ENCODE measurements at regions of chr19 and their contacts with region 1.

Region 1: DNA sequence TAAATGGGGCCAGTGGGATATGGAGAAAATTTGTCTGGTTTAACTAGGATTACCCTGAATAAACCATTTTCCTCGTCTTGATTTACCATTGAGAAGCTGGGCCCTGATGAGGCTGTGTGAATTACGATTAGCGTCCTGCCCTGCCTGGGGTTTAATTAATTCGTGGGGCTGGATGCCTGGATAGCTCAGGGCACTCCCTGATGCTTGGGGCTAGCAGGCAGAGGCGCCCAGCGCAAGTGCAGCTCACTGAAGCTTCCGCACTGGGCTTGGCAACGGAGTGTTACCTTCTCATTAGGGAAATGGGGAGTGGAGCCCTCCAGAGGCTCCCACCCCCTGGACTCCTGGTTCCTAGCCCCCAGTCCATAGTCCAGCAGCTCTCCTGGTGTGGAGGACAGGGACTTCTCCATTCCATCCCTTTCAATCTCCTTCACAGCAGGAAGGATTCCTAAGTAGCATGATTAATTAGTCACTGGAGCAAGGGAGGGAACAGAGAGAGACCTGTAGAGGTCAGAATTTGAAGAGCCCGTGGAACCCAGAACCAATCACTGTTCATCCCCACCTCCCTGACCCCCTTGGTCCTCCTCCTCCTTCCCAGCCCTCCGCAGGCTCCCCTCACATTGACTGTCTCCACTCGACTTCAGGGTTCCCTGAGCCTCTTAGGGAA is 107.2 kb downstream of the UQCRFS1 start:
- DNase-seq: no peak
- H3K4me3 ChIP-seq: no peak overlapping the region
- H3K27ac ChIP-seq: no peak overlapping the region
- H3K27me3 ChIP-seq: peaks cover 0 to 5% (median 0%) of the 10 kb centered on the region in 45 donors
- CTCF ChIP-seq: no peak

Region 2: GRCh38 chr19:28960986-28961705 is 144.6 kb before region 1 on chr19:
- intact Hi-C with region 1: no loop called
- DNase-seq: no peak
- H3K4me3 ChIP-seq: no peak overlapping the region
- H3K27ac ChIP-seq: no peak overlapping the region
- H3K27me3 ChIP-seq: no peaks in the 10 kb centered on the region
- CTCF ChIP-seq: no peak

Region 3: GRCh38 chr19:29263305-29264135 is 157.8 kb after region 1 on chr19:
- intact Hi-C with region 1: loop called in 1 of 2 experiments (anchors 5 kb)
- DNase-seq: peak in 5 of 10 donors; percentile 50 to 65 (median 59)
- H3K4me3 ChIP-seq: no peak overlapping the region
- H3K27ac ChIP-seq: no peak overlapping the region
- H3K27me3 ChIP-seq: peaks cover 0 to 9% (median 0%) of the 10 kb centered on the region in 45 donors
- CTCF ChIP-seq: peak; percentile 38 to 76 (median 66)